ENCODE measurements at regions of chr5 and their contacts with region 1.

Region 1: GRCh38 chr5:107248066-107248695 is 422.6 kb downstream of the EFNA5 start:
- DNase-seq: no peak
- H3K4me3 ChIP-seq: no peak overlapping the region
- H3K27ac ChIP-seq: no peak overlapping the region
- H3K27me3 ChIP-seq: no peaks in the 10 kb centered on the region
- CTCF ChIP-seq: peak; percentile 66

Region 2: GRCh38 chr5:107232788-107233187 is 15.4 kb before region 1 on chr5:
- CTCF ChIA-PET with region 1: interaction called, 10 read pairs
- POLR2A ChIA-PET with region 1: no interaction called
- DNase-seq: no peak
- H3K4me3 ChIP-seq: no peak overlapping the region
- H3K27ac ChIP-seq: no peak overlapping the region
- H3K27me3 ChIP-seq: no peaks in the 10 kb centered on the region
- CTCF ChIP-seq: no peak

Region 3: GRCh38 chr5:107269253-107269652 is 21.1 kb after region 1 on chr5:
- CTCF ChIA-PET with region 1: interaction called, 11 read pairs
- POLR2A ChIA-PET with region 1: no interaction called
- DNase-seq: no peak
- H3K4me3 ChIP-seq: no peak overlapping the region
- H3K27ac ChIP-seq: no peak overlapping the region
- H3K27me3 ChIP-seq: no peaks in the 10 kb centered on the region
- CTCF ChIP-seq: no peak

Region 4: GRCh38 chr5:107633171-107633901 is 385.2 kb after region 1 on chr5:
- CTCF ChIA-PET with region 1: no interaction called
- POLR2A ChIA-PET with region 1: no interaction called
- DNase-seq: no peak
- H3K4me3 ChIP-seq: no peak overlapping the region
- H3K27ac ChIP-seq: no peak overlapping the region
- H3K27me3 ChIP-seq: no peaks in the 10 kb centered on the region
- CTCF ChIP-seq: no peak

Measured in AG04450 (cell line).